ENCODE measurements at regions of chr5 and their contacts with region 1.

Region 1: DNA sequence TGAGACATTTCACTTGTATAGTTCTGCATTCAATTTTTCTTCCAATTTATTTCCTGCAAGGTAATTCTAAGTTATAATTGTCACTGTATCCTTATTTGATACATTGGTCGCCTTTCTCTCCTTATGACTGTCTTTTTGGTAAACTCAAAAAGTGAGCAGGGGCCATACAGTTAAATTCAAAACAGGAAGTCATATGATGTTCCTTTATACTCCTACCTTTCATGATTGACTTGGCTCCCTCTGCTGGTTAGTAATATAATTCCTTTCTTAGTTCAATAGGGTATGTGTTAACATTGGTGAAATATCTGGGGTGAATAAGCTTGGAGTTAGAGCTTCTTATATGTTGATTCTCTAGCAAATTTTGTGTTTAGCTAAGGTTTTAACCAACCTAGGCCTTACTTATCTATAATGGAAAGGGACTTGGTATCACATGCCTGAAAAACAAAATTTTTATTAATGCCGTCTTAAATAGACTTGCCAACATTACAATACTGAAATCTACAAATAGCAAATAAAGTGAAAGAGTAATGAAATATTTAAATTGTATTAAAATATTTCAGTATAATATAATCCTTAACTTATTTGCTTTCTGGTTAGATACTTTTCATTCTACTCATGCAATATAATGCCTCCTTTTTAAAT is 6.0 kb upstream of the NIPBL start:
- DNase-seq: peak; percentile 84

Region 2: GRCh38 chr5:36739751-36740221 is 130.7 kb before region 1 on chr5:
- in situ Hi-C with region 1: loop called (anchors 25 kb)
- DNase-seq: peak; percentile 92

Region 3: DNA sequence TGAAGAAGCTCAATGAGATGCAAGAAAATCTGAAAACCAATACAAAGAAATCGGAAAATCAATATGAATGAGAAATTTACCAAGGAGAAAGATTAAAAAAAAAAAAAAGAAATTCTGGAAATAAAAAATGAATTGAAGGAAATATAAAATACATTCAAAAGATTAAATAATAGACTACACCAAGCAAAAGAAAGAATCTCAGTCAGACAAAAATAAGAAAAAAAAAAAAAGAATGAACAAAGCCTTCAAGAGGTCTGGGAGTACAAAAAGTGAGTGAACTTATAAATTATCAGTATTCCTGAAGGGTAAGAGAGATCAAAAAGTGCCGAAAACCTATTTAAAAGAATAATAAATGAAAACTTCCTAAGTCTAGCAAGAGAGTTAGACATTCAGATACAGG is 363.8 kb after region 1 on chr5:
- in situ Hi-C with region 1: no loop called
- DNase-seq: no peak

Measured in KBM-7 (cell line).